ENCODE measurements at regions of chr1 and their contacts with region 1.

Region 1: DNA sequence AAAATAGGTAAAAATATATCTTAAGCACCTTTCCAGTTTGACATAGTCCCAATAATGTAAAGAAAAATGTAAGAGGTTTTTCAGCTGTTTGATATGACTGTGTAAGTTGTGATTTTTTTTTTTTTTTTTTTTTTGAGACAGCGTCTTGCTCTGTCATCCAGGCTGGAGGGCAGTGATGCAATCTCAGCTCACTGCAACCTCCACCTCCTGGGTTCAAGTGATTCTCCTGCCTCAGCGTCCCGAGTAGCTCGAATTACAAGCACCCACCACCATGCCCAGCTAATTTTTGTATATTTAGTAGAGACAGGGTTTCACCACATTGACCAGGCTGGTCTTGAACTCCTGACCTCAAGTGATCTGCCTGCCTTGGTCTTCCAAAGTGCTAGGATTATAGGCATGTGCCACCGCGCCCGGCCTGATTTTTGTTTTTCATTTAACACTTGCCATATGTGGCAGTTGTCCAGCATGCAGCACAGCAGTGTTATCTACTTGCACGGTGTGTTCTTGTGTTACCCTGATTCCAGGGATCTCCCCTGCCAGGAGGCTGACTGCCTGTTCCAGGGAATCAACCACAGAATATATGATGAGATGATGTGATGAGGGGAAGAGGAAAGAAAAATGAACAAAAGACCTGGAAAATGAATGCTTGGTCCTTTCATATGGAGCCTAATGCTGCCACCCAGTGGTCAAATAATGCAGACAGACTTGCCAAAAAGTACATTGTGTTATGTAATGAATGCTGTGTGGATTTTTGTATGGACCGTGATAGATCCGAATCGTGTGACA is 79.0 kb downstream of the RAVER2 start:
- DNase-seq: peak; percentile 81
- ATAC-seq: peak; percentile 82
- H3K4me3 ChIP-seq: no peak overlapping the region
- H3K27ac ChIP-seq: no peak overlapping the region
- H3K4me1 ChIP-seq: peaks cover 6% of the 10 kb centered on the region; the same call in 1 of the 2 replicates
- H3K27me3 ChIP-seq: no peaks in the 10 kb centered on the region
- CTCF ChIP-seq: peak; percentile 87
- POLR2A ChIP-seq: no peak
- RAD21 ChIP-seq: peak; percentile 91

Region 2: DNA sequence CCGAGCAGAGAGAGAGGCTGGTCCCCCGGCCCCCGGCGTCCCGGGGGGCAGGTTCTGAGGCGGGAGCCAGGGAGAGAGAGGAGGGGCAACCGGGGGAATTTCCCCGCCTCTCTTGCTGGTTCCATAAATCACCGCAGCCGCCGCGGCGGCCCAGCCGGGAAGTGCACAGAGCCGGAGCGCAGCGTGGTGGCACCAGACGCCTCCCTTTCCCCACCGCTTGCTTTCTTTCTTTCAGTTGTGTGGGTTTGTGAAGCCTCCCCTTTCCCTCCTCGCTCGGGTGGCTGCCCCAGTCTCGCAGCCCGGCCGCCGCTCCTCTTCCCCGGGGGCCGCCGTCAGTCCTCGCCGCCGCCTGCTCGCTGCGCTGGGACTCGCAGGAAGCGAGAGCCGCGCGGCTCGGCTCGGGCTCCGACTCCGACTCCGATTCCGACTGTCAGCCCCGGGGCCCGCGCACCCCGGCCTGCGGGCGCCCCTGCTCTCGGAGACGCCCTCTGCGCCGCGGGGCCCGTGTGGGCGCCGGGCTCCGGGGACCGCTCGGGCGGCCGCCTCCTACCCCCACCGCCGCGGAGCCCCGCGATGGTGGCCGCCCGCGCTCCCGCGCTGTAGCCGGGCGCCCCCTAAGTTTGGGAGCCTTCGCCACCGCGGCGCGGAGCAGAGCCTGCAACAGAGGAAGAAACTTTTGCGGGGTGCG is 353.8 kb before region 1 on chr1 and contains the start of gene CACHD1:
- CTCF ChIA-PET with region 1: no interaction called
- POLR2A ChIA-PET with region 1: no interaction called
- dilution Hi-C with region 1: no loop called
- in situ Hi-C with region 1: no loop called
- intact Hi-C with region 1: loop called (anchors 1 kb)
- DNase-seq: peak; percentile 70
- ATAC-seq: peak; percentile 80
- H3K4me3 ChIP-seq: peak within 1 kb of the TSS; percentile 80
- H3K27ac ChIP-seq: peak within 1 kb of the TSS; percentile 55
- H3K4me1 ChIP-seq: peaks cover 2% of the 10 kb centered on the region; the same call in 1 of the 2 replicates
- H3K27me3 ChIP-seq: peaks cover 15% of the 10 kb centered on the region
- CTCF ChIP-seq: peak; percentile 38
- POLR2A ChIP-seq: no peak
- RAD21 ChIP-seq: peak; percentile 42
- total RNA-seq, gene CACHD1: 5.6 and 5.9 TPM in 2 replicates

Region 3: DNA sequence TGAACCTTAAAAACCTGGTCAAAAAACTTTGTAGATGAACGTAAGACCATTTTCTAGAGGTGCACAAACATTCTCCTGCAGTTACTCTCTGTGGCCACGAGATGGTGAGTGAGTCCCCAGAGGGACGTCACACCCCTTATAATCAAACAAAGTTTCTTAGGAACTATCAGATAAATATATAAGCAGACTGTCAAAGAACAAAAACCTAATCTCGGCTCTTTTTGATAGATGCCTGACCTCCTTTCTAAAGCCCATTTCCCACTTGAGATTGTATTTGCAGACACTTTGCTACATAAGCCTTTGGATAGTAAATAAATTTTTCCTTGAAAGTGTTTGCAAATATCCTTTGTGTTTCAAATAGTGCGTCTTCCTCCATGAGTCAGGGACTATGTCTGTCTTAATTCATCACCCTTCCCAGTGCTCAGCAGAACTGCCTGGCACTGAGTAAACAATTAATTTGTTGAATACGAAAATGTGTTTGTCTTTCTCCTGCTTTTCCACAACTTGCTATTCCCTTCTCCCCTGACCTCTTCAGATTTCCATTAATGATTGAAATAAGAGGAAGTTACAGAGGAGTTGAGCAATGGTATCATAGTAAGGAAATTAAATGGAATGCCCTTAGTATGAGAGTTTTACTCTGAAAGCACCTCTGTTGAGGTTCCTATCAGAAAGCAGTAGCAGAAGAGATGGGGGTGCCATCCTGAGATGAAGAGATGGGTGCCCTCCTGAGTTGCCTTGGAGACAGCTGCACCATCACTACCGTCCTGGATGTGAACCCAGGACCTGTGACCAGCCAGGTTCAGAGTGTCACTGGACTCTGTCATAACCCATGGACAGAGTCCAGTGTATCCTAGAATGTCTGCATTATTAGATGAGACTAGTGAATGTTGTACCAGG is 136.8 kb before region 1 on chr1:
- CTCF ChIA-PET with region 1: interaction called, 3 read pairs
- POLR2A ChIA-PET with region 1: no interaction called
- dilution Hi-C with region 1: no loop called
- in situ Hi-C with region 1: loop called (anchors 10 kb)
- intact Hi-C with region 1: loop called (anchors 1 kb)
- DNase-seq: peak; percentile 65
- ATAC-seq: peak; percentile 87
- H3K4me3 ChIP-seq: no peak overlapping the region
- H3K27ac ChIP-seq: no peak overlapping the region
- H3K4me1 ChIP-seq: peaks cover 12% of the 10 kb centered on the region
- H3K27me3 ChIP-seq: no peaks in the 10 kb centered on the region
- CTCF ChIP-seq: peak; percentile 84
- POLR2A ChIP-seq: no peak
- RAD21 ChIP-seq: peak; percentile 69

Region 4: GRCh38 chr1:64744492-64745180 is 79.2 kb before region 1 on chr1 and contains the start of gene RAVER2:
- CTCF ChIA-PET with region 1: interaction called, 5 read pairs
- POLR2A ChIA-PET with region 1: no interaction called
- dilution Hi-C with region 1: no loop called
- in situ Hi-C with region 1: no loop called
- intact Hi-C with region 1: loop called (anchors 2 kb)
- DNase-seq: peak; percentile 49
- ATAC-seq: peak; percentile 91
- H3K4me3 ChIP-seq: peak within 1 kb of the TSS; percentile 68
- H3K27ac ChIP-seq: peak within 1 kb of the TSS; percentile 12; the same call in 1 of the 2 replicates
- H3K4me1 ChIP-seq: no peaks in the 10 kb centered on the region
- H3K27me3 ChIP-seq: no peaks in the 10 kb centered on the region
- CTCF ChIP-seq: no peak; the same call in 1 of the 2 replicates
- POLR2A ChIP-seq: no peak
- RAD21 ChIP-seq: no peak
- total RNA-seq, gene RAVER2: 6.1 and 6.7 TPM in 2 replicates

Measured in IMR-90 (cell line).